Activated B cell treated with CpG ODN at 0.5 μM for 24 hours (primary cell): ENCODE measurements at regions of chr12 and their contacts with region 1.

Region 1: DNA sequence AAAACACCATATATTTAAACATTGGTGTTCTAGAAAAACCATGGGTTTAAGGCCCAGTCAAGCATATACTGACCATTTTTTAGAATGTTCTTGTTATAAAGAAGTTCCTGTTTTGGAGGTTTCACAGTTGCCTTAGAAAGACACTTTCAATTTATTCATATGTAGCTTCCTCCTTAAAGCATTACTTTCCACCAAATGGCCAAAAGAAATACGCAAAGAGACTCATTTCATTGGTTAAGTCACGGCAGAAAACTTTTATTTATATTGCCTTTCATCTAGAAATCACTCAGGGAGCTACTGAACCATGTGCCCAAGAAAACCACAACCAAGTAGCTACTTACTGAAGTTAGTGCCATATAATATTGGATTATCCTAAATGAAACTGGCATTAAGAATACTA is 40.0 kb downstream of the MYBPC1 start:
- DNase-seq: no peak
- ATAC-seq: peak; percentile 92
- H3K4me3 Mint-ChIP-seq: peak overlapping the region; percentile 69
- H3K27ac Mint-ChIP-seq: peak overlapping the region; percentile 94
- H3K4me1 Mint-ChIP-seq: peaks cover 41% of the 10 kb centered on the region
- H3K27me3 Mint-ChIP-seq: no peaks in the 10 kb centered on the region
- CTCF ChIP-seq: no peak

Region 2: DNA sequence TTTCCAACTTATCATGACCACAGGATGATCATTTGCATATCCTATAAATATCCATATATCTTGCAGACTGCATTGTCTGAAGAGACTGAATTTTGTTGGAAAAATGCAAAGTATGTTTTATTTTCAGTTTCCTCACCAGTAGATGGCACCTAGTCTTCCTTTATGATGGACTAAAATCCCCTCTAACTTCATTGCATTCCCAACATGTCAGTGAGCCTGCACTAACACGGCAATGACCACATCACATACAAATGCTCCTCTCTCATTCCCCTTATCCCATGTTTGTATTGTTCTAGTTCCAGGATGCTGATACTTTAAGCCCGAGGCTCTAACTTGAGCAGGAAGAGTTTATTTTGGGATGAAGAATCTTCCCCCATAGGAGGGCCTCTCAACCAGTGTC is 64.7 kb before region 1 on chr12:
- CTCF ChIA-PET with region 1: no interaction called
- POLR2A ChIA-PET with region 1: no interaction called
- intact Hi-C with region 1: no loop called
- DNase-seq: no peak
- ATAC-seq: peak; percentile 34
- H3K4me3 Mint-ChIP-seq: no peak overlapping the region
- H3K27ac Mint-ChIP-seq: no peak overlapping the region
- H3K4me1 Mint-ChIP-seq: peaks cover 4% of the 10 kb centered on the region
- H3K27me3 Mint-ChIP-seq: peaks cover 7% of the 10 kb centered on the region
- CTCF ChIP-seq: no peak

Region 3: DNA sequence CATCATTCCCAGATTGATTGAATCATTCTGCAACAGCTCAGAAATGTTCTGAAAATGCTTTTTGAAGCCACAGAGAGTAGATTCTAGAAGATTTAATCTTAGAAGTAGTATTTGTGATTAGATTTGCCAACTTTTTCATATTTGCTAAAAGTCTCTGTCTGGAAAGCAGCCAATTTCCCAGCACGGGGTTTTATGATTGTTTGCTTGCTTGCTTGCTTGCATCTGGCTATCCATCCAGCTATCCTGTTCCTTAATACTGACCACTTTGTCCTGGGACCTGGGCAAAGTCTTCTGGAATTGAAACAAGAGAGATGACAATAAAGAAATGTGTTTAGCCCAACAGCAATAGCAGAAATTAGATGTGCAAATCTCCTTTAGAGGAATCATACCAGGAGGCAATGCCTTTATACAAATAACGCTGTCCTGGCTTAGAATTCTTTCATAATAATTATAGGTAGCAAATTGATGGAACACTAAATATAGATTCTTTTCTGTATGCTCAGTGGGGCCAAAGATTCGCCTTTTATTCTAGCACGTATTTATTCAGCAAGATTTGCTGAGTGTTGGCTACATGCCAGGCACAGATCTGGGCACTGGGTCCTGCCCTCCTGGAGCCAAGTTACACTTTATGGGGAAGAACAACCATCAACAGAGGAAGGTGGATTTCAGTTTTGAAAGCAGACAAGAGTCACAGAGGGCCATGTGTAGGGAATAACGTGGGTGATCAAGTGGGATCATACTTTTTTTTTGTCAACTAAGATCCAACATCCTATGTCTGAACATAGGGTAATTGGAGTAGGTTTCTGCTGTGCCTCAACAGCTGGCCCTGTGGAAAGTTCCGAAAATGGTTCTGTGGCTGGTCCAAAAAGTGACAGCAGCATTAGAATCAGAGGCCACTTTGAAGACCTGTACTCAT is 14.6 kb before region 1 on chr12:
- CTCF ChIA-PET with region 1: interaction called, 4 read pairs
- POLR2A ChIA-PET with region 1: interaction called, 4 read pairs
- intact Hi-C with region 1: loop called (anchors 2 kb)
- DNase-seq: no peak
- ATAC-seq: no peak
- H3K4me3 Mint-ChIP-seq: no peak overlapping the region
- H3K27ac Mint-ChIP-seq: no peak overlapping the region
- H3K4me1 Mint-ChIP-seq: peaks cover 27% of the 10 kb centered on the region
- H3K27me3 Mint-ChIP-seq: no peaks in the 10 kb centered on the region
- CTCF ChIP-seq: no peak

Region 4: DNA sequence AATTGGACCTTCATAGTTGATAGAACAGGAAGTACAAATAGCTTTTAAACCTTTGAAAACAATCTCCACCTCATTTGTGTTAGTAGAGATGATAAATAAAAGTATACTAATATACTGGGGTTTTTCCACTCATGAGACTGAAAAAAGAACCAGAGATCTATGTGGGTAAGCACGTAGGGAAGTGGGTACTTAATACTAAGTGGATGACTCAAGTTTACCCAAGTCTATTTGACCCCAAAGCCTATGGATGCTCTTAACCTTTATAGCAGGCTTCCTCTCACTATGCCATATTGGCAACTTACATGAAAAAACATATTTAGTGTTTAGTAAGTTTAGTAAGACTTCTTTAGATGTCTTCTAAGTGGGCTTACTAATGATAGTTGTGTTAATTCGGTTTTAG is 13.5 kb after region 1 on chr12:
- CTCF ChIA-PET with region 1: no interaction called
- POLR2A ChIA-PET with region 1: interaction called, 9 read pairs
- intact Hi-C with region 1: loop called (anchors 1 kb)
- DNase-seq: no peak
- ATAC-seq: peak; percentile 90
- H3K4me3 Mint-ChIP-seq: no peak overlapping the region
- H3K27ac Mint-ChIP-seq: peak overlapping the region; percentile 22
- H3K4me1 Mint-ChIP-seq: peaks cover 14% of the 10 kb centered on the region
- H3K27me3 Mint-ChIP-seq: no peaks in the 10 kb centered on the region
- CTCF ChIP-seq: no peak

Region 5: DNA sequence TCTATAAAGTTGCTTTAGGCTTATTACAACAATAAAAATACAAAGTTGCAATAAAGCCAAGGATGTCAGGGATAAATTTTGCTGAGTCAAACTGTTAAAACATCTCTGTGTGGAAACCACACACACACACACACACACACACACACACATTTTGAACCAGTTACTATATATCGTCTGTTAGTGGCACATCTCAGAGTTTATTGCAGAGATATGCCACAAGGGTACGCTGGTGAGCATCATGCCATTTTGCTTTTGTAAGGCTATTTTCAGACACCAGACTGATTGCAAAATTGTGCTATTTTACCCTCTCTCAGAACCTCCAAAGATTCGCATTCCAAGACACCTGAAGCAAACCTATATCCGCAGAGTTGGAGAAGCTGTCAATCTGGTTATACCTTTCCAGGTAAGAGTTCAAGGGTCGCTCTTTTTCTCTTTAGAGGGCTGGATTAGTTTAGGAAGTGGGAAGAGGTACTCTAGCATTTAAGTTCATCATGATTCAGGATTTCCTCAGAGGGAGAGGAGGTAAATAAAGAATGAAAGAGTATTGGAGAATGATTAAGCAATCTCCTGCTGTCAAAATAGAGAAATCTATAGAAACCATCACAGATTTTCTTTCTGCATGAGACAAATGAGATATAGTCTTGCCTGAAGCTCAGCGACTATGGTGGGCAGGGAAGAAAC is 35.4 kb after region 1 on chr12:
- CTCF ChIA-PET with region 1: no interaction called
- POLR2A ChIA-PET with region 1: no interaction called
- intact Hi-C with region 1: loop called (anchors 1 kb)
- DNase-seq: no peak
- ATAC-seq: peak; percentile 53
- H3K4me3 Mint-ChIP-seq: no peak overlapping the region
- H3K27ac Mint-ChIP-seq: no peak overlapping the region
- H3K4me1 Mint-ChIP-seq: peaks cover 21% of the 10 kb centered on the region
- H3K27me3 Mint-ChIP-seq: no peaks in the 10 kb centered on the region
- CTCF ChIP-seq: no peak

Region 6: DNA sequence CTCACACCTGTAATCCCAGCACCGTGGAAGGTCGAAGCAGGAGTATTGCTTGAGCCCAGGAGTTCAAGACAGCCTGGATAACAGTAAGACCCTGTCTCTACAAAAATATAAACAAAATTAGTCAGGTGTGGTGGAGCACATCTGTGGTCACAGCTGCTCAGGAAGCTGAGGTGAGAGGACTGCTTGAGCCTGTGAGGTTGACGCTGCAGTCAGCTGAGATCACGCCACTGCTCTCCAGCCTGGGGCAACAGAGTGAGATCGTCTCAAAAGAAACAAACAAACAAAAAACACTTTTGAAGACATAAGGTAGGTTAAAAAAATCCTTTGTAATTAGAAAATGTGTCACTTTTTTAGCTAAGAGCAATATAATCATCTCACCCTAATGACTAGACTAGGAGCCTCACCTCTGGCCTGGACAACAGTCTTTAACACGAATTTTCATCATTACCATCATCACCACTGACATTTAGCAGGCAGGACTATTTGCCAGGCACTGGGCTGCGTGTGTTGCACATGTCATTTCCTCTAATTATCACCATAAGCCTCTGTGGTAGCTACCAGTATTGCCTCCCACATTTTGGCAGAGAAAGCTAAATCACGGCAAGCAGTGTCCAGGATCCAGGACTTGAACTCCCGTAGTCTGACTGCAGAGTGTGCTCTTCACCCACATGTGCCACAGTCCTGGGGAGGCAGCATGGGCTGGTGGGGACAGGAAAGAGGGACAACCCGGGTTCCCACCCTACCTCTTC is 109.2 kb after region 1 on chr12:
- CTCF ChIA-PET with region 1: no interaction called
- POLR2A ChIA-PET with region 1: interaction called, 8 read pairs
- intact Hi-C with region 1: loop called (anchors 1 kb)
- DNase-seq: peak; percentile 54
- ATAC-seq: peak; percentile 88
- H3K4me3 Mint-ChIP-seq: peak overlapping the region; percentile 36
- H3K27ac Mint-ChIP-seq: peak overlapping the region; percentile 96
- H3K4me1 Mint-ChIP-seq: peaks cover 69% of the 10 kb centered on the region
- H3K27me3 Mint-ChIP-seq: no peaks in the 10 kb centered on the region
- CTCF ChIP-seq: no peak

Region 7: DNA sequence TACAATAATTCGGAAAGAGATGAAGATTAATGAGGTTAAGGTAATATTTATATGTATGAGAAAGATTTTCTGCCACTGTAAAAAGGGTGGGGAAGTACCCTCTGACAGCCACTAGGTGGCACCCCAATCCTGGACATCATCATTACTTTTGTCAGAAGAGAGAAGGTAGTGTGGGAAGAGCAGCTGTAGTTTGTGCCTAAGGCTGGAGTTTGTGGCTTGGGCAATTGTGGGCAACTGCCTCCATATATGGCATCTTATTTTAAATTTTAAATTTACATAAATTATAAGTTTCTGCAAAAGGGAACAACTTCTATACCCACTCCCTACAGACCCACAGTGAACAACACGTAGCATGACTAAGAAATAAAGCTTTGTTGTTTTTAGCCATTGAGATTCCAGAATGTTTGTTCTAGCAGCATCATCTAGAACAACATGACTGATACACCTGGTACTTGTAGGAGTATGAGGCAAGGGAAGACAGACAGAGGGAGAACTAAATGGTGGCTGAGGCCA is 139.0 kb after region 1 on chr12:
- CTCF ChIA-PET with region 1: no interaction called
- POLR2A ChIA-PET with region 1: no interaction called
- intact Hi-C with region 1: no loop called
- DNase-seq: peak; percentile 27
- ATAC-seq: peak; percentile 92
- H3K4me3 Mint-ChIP-seq: no peak overlapping the region
- H3K27ac Mint-ChIP-seq: no peak overlapping the region
- H3K4me1 Mint-ChIP-seq: peaks cover 2% of the 10 kb centered on the region
- H3K27me3 Mint-ChIP-seq: no peaks in the 10 kb centered on the region
- CTCF ChIP-seq: peak; percentile 95